ENCODE measurements at regions of chr19 and their contacts with region 1.

Region 1: GRCh38 chr19:38618590-38619360 is at the start of gene EIF3K:
- DNase-seq: peak; percentile 100
- total RNA-seq, gene EIF3K: 170 to 191 TPM

Region 2: DNA sequence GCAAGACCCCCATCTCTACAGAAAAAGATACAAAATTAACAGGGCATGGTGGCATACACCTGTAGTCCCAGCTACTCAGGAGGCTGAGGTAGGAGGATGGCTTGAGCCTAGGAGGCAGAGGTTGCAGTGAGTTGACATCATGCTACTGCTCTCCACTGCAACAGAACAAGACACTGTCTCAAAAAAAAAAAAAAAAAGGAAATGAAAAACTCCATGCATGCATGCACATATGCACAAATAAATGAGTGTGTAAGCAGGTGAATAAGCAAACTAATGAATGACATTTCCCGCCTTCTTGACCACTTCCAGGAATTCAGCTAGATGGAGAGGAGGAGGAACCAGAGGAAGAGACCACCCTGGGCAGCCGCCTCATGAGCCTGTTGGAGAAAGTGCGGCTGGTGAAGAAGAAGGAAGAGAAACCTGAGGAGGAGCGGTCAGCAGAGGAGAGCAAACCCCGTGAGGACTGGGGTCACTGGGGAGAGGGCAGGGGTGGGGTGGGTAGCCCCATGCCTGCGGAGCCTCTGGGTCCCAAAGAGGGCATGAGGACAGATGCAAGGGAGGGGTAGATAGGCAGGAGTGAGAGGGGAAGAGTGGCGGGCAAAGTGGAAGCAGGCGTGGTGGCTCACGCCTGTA is 126.5 kb before region 1 on chr19:
- intact Hi-C with region 1: loop called in 1 of 2 experiments (anchors 1 kb)
- DNase-seq: no peak

Region 3: GRCh38 chr19:38514812-38515633 is 103.8 kb before region 1 on chr19:
- intact Hi-C with region 1: no loop called
- DNase-seq: peak; percentile 90

Region 4: DNA sequence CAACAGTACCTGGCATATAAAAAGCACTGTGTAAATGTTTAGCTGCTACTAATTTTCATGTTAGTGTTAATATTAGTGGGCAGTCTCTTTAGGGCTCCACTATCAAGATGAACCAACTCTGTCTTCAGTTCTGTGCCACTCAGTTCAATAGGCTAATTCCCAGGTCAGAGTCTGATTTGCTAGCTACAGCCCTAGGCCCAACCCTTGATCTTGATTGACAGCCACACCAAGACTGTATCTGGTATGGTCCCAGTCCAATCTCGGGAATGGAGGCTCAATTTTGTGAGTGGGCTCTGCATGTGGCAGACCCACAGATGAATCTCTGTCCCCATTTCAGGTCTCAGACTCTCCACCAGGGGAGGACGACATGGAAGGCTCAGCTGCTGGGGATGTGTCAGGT is 47.1 kb before region 1 on chr19:
- intact Hi-C with region 1: loop called in 1 of 2 experiments (anchors 2 kb)
- DNase-seq: no peak

Region 5: GRCh38 chr19:39362682-39363657 is 744.2 kb after region 1 on chr19:
- intact Hi-C with region 1: no loop called
- DNase-seq: no peak

Measured in posterior vena cava (tissue), 2 donors.